Vagina (tissue), 2 donors: ENCODE measurements at regions of chr14 and their contacts with region 1.

Region 1: DNA sequence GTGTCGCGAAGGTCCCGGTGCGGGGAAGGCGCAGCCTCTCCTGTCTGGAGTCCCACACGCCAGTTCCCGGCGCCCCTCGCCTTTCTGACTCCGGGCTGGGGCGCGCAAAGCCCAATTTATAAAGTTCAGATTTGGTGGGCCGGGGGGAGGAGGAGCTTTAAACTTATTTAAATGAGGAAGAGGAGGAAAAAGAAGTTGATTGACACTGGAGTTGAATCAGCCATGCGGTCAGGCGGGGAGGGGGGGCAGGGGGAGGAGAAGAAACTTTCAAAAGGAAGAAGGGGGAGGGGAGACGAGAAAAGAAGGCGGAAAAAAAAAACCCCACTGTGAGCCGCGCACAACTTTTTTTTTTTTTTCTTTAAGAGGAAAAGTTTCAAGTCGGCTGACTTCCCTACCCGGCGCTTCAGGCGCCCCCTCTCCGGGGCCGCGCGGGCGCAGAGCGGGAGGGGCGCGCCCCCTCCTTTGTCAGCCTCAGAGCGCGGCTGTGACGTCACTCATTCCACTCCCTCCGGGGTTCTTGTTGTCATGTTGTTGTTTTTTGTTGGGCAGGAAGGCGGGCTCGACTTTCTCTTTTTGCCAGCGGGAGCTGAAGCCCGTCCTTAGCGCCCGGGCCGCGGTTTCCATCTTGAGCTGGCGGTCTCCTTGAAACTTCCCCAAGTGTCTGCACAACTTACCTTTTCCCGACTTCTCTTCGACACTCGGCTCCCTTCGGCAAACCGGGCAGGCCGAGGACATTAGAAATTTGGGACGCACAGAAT is at the start of gene ZFP36L1:
- DNase-seq: peak; percentile 96 to 98
- H3K4me3 ChIP-seq: peak within 1 kb of the TSS; percentile 84 to 95
- H3K27ac ChIP-seq: peak within 1 kb of the TSS; percentile 99
- H3K4me1 ChIP-seq: peaks cover 28% of the 10 kb centered on the region
- H3K27me3 ChIP-seq: no peaks in the 10 kb centered on the region
- CTCF ChIP-seq: no peak
- POLR2A ChIP-seq: peak; percentile 82 to 100
- total RNA-seq, gene ZFP36L1: 1,405 TPM

Region 2: DNA sequence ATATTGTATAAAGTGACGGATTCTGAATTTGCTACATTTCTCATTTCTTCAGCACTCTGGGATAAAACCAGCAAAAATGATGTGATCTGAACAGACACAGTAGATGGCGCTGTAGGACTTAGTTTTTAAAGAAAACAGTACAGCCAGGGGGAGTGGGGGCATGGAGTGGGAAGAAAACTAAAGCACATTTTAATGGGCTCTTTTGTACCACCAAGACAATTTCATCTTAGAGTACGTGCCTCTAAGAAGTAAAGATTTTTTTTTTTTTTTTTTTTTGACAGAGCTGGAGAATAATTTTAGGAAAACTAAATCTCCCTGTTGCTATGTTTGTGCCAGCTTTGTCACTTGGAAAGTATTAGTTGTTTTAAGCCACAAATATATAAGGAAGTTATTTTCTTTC is 849.2 kb before region 1 on chr14:
- intact Hi-C with region 1: loop called (anchors 5 kb)
- DNase-seq: no peak
- H3K4me3 ChIP-seq: no peak overlapping the region
- H3K27ac ChIP-seq: peak overlapping the region; percentile 88
- H3K4me1 ChIP-seq: peaks cover 41% of the 10 kb centered on the region
- H3K27me3 ChIP-seq: no peaks in the 10 kb centered on the region
- CTCF ChIP-seq: peak; percentile 59 to 90 (median 68)
- POLR2A ChIP-seq: no peak

Region 3: GRCh38 chr14:68392393-68393141 is 400.6 kb before region 1 on chr14:
- intact Hi-C with region 1: loop called (anchors 5 kb)
- DNase-seq: no peak
- H3K4me3 ChIP-seq: no peak overlapping the region
- H3K27ac ChIP-seq: peak overlapping the region; percentile 77
- H3K4me1 ChIP-seq: peaks cover 52% of the 10 kb centered on the region
- H3K27me3 ChIP-seq: no peaks in the 10 kb centered on the region
- CTCF ChIP-seq: no peak
- POLR2A ChIP-seq: no peak

Region 4: DNA sequence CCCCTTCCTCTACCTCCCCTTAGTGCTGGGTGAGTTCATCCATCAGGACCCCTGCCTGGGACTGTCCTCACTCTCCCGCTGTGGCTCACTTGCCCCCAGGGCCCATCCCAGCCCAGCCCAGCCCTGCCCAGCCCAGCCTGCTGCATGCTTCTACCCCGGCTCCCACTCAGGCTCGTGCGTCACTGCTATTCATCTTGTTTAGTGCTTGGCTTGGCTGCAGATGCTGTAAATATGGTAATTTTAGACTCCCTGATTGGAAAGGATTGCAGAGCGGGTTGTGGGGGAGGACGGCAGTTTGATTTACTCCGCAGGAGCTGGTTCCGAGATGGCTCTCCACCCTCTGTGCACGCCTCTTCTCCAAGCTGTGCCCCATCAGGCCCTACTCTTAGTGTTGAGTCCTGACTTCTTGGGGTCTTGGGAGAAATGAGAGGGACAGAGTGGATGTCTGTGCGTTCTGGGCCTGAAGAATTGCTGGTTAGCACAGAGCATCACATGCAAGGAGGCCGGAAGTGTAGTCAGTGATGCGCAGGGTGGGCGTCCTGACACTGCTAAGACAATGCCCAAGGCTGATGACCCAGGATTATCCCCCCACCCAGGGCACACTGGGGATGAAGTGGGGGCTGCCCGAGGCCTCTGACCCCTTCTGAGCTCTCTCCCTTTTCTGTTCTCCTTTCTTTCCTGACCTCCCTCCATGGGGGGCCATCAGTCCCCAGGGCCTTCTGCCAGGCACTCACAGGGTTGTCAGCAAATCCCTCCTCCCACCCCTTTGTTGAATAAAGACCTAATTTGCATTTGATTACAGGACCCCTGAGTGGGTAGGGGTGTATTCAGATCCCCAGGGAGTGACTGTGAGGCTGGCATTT is 244.7 kb before region 1 on chr14:
- intact Hi-C with region 1: loop called (anchors 5 kb)
- DNase-seq: peak in 1 of 2 donors; percentile 98
- H3K4me3 ChIP-seq: peak overlapping the region in 1 of 2 donors; percentile 23
- H3K27ac ChIP-seq: peak overlapping the region; percentile 96
- H3K4me1 ChIP-seq: peaks cover 98% of the 10 kb centered on the region
- H3K27me3 ChIP-seq: no peaks in the 10 kb centered on the region
- CTCF ChIP-seq: no peak
- POLR2A ChIP-seq: no peak

Region 5: GRCh38 chr14:68682166-68683103 is 110.7 kb before region 1 on chr14:
- intact Hi-C with region 1: loop called (anchors 5 kb)
- DNase-seq: no peak
- H3K4me3 ChIP-seq: peak overlapping the region in 1 of 2 donors; percentile 21
- H3K27ac ChIP-seq: peak overlapping the region; percentile 85
- H3K4me1 ChIP-seq: peaks cover 57% of the 10 kb centered on the region
- H3K27me3 ChIP-seq: no peaks in the 10 kb centered on the region
- CTCF ChIP-seq: no peak
- POLR2A ChIP-seq: no peak

Region 6: GRCh38 chr14:68757618-68758081 is 35.5 kb before region 1 on chr14:
- intact Hi-C with region 1: no loop called
- DNase-seq: no peak
- H3K4me3 ChIP-seq: no peak overlapping the region
- H3K27ac ChIP-seq: no peak overlapping the region
- H3K4me1 ChIP-seq: peaks cover 35% of the 10 kb centered on the region
- H3K27me3 ChIP-seq: no peaks in the 10 kb centered on the region
- CTCF ChIP-seq: no peak
- POLR2A ChIP-seq: no peak

Region 7: DNA sequence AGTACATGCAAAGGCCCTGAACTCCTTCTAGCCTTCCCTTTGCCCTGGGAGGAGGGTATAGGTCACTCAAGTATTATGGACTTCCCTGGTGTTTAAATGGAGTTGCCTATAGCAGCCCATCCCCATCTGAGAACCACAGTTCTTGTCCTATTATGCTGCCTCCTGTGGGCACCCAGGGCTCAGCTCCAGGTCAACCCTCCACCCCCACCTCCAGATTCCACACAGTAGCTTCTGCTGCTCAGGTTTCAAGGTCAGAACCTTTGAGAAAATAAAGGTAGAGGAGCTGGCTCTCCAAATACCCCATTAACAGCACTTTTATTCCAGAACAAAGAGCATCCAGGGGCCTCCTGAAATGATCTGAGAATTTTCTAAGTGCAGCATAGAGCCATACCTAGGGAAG is 128.5 kb after region 1 on chr14:
- intact Hi-C with region 1: no loop called
- DNase-seq: no peak
- H3K4me3 ChIP-seq: no peak overlapping the region
- H3K27ac ChIP-seq: no peak overlapping the region
- H3K4me1 ChIP-seq: peaks cover 13% of the 10 kb centered on the region
- H3K27me3 ChIP-seq: no peaks in the 10 kb centered on the region
- CTCF ChIP-seq: no peak
- POLR2A ChIP-seq: no peak